T-cell (primary cell): ENCODE measurements at regions of chr5 and their contacts with region 1.

Region 1: GRCh38 chr5:137932800-137933199 is 43.5 kb downstream of the PKD2L2 start:
- DNase-seq: no peak
- ATAC-seq: no peak
- H3K4me3 ChIP-seq: no peak overlapping the region
- H3K4me3 Mint-ChIP-seq: no peak overlapping the region
- H3K27ac ChIP-seq: no peak overlapping the region
- H3K27ac Mint-ChIP-seq: no peak overlapping the region
- H3K4me1 ChIP-seq: no peaks in the 10 kb centered on the region
- H3K4me1 Mint-ChIP-seq: no peaks in the 10 kb centered on the region
- H3K27me3 ChIP-seq: no peaks in the 10 kb centered on the region
- H3K27me3 Mint-ChIP-seq: no peaks in the 10 kb centered on the region

Region 2: DNA sequence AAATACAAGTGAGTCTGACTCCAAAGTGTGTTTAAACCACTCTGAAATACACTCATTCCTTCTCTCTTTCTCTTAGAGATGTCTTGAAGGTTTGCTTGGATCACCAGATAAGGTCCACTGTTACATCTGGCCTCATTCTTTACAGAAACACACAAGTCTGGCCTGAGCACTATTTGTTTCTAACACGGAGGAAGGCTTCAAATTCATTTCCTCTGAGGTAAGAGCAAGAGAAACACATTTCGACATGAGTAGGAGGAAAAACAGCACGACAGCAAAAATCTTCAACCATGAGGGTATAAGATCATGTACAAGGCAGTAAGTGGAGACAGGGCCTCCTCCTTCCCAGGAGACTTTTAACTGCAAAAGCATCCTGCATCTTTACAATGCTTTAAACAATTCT is 1257.3 kb after region 1 on chr5:
- CTCF ChIA-PET with region 1: no interaction called
- POLR2A ChIA-PET with region 1: interaction called in 1 of 2 experiments, 10 read pairs
- DNase-seq: no peak
- ATAC-seq: no peak
- H3K4me3 ChIP-seq: no peak overlapping the region
- H3K4me3 Mint-ChIP-seq: no peak overlapping the region
- H3K27ac ChIP-seq: no peak overlapping the region
- H3K27ac Mint-ChIP-seq: no peak overlapping the region
- H3K4me1 ChIP-seq: no peaks in the 10 kb centered on the region
- H3K4me1 Mint-ChIP-seq: peaks cover 11 to 21% (median 18%) of the 10 kb centered on the region in 3 donors
- H3K27me3 ChIP-seq: no peaks in the 10 kb centered on the region
- H3K27me3 Mint-ChIP-seq: no peaks in the 10 kb centered on the region